Breast epithelium (tissue), 4 donors: ENCODE measurements at regions of chr12 and their contacts with region 1.

Region 1: GRCh38 chr12:106663385-106663784 is 80.6 kb downstream of the RFX4 start:
- DNase-seq: no peak
- H3K4me3 ChIP-seq: no peak overlapping the region
- H3K27ac ChIP-seq: no peak overlapping the region
- H3K4me1 ChIP-seq: no peaks in the 10 kb centered on the region
- H3K27me3 ChIP-seq: no peaks in the 10 kb centered on the region
- CTCF ChIP-seq: no peak
- POLR2A ChIP-seq: no peak

Region 2: DNA sequence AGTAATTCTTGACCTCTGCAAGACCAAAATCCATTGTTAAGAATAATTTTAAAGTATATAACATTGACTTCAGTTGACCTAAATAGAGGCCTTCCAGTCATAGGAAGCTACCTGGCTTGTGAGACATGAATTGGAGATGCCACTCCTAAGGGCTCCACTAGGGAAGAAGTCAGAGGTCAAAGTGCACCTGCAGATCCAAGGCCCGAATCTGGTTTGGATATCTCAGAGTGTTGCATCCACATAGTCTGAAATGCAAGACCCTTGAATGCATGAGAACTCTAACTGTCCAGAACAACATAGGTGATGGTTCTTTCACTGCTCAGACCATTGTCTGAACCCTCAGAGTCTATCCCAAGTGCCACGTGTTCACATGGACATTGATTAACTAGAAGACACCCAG is 58.1 kb before region 1 on chr12:
- intact Hi-C with region 1: loop called (anchors 5 kb)
- DNase-seq: no peak
- H3K4me3 ChIP-seq: no peak overlapping the region
- H3K27ac ChIP-seq: no peak overlapping the region
- H3K4me1 ChIP-seq: no peaks in the 10 kb centered on the region
- H3K27me3 ChIP-seq: no peaks in the 10 kb centered on the region
- CTCF ChIP-seq: no peak
- POLR2A ChIP-seq: no peak

Region 3: GRCh38 chr12:107264667-107265066 is 601.3 kb after region 1 on chr12:
- intact Hi-C with region 1: no loop called
- DNase-seq: no peak
- H3K4me3 ChIP-seq: no peak overlapping the region
- H3K27ac ChIP-seq: no peak overlapping the region
- H3K4me1 ChIP-seq: no peaks in the 10 kb centered on the region
- H3K27me3 ChIP-seq: peaks cover 0 to 4% of the 10 kb centered on the region in 2 donors
- CTCF ChIP-seq: no peak
- POLR2A ChIP-seq: no peak

Region 4: DNA sequence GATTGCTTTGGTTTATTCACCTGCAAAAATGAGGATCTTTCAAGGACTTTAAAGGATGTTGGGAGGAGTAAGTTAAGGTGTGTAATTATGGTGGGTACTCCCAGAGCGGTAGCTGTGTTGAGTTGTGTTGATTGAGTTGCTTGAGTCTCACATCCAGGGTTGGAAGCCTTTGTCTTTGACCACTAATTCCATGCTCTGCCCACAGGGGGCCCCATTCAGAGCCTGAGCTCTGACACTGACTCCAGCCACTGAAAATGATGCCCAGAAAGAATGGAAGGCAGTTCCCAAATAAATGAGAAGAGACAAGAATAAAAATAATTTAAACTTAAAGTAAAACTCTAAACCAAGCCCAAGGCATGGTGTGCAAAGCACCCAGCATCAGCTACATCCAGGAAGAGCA is 784.8 kb after region 1 on chr12:
- intact Hi-C with region 1: no loop called
- DNase-seq: no peak
- H3K4me3 ChIP-seq: no peak overlapping the region
- H3K27ac ChIP-seq: no peak overlapping the region
- H3K4me1 ChIP-seq: no peaks in the 10 kb centered on the region
- H3K27me3 ChIP-seq: no peaks in the 10 kb centered on the region
- CTCF ChIP-seq: no peak
- POLR2A ChIP-seq: no peak